Endothelial cell of umbilical vein (primary cell): ENCODE measurements at regions of chr10 and their contacts with region 1.

Region 1: GRCh38 chr10:74035303-74035702 is 37.4 kb downstream of the VCL start:
- DNase-seq: peak; percentile 51
- H3K4me3 ChIP-seq: no peak overlapping the region
- H3K27ac ChIP-seq: no peak overlapping the region
- H3K4me1 ChIP-seq: peaks cover 10% of the 10 kb centered on the region
- H3K27me3 ChIP-seq: no peaks in the 10 kb centered on the region
- CTCF ChIP-seq: peak; percentile 9 to 14
- POLR2A ChIP-seq: no peak

Region 2: GRCh38 chr10:73956476-73957359 is 78.6 kb before region 1 on chr10:
- CTCF ChIA-PET with region 1: interaction called, 4 read pairs
- POLR2A ChIA-PET with region 1: no interaction called
- dilution Hi-C with region 1: no loop called
- intact Hi-C with region 1: loop called (anchors 2 kb)
- DNase-seq: peak; percentile 33
- H3K4me3 ChIP-seq: no peak overlapping the region
- H3K27ac ChIP-seq: no peak overlapping the region
- H3K4me1 ChIP-seq: peaks cover 10% of the 10 kb centered on the region
- H3K27me3 ChIP-seq: no peaks in the 10 kb centered on the region
- CTCF ChIP-seq: no peak
- POLR2A ChIP-seq: no peak

Region 3: GRCh38 chr10:74021248-74022055 is 13.9 kb before region 1 on chr10:
- CTCF ChIA-PET with region 1: interaction called, 18 read pairs
- POLR2A ChIA-PET with region 1: no interaction called
- dilution Hi-C with region 1: no loop called
- intact Hi-C with region 1: no loop called
- DNase-seq: peak; percentile 55
- H3K4me3 ChIP-seq: no peak overlapping the region
- H3K27ac ChIP-seq: peak overlapping the region; percentile 20
- H3K4me1 ChIP-seq: peaks cover 25% of the 10 kb centered on the region
- H3K27me3 ChIP-seq: no peaks in the 10 kb centered on the region
- CTCF ChIP-seq: no peak
- POLR2A ChIP-seq: no peak

Region 4: GRCh38 chr10:74047868-74048267 is 12.6 kb after region 1 on chr10:
- CTCF ChIA-PET with region 1: interaction called, 10 read pairs
- POLR2A ChIA-PET with region 1: no interaction called
- dilution Hi-C with region 1: no loop called
- intact Hi-C with region 1: no loop called
- DNase-seq: no peak
- H3K4me3 ChIP-seq: no peak overlapping the region
- H3K27ac ChIP-seq: no peak overlapping the region
- H3K4me1 ChIP-seq: no peaks in the 10 kb centered on the region
- H3K27me3 ChIP-seq: no peaks in the 10 kb centered on the region
- CTCF ChIP-seq: no peak
- POLR2A ChIP-seq: no peak